Activated CD8-positive, alpha-beta T cell treated with anti-CD3 and anti-CD28 coated beads, Interleukin-2, amount 10 ng/mL, durations not matched to agents 7 days and 5 days (primary cell): ENCODE measurements at regions of chr17 and their contacts with region 1.

Region 1: DNA sequence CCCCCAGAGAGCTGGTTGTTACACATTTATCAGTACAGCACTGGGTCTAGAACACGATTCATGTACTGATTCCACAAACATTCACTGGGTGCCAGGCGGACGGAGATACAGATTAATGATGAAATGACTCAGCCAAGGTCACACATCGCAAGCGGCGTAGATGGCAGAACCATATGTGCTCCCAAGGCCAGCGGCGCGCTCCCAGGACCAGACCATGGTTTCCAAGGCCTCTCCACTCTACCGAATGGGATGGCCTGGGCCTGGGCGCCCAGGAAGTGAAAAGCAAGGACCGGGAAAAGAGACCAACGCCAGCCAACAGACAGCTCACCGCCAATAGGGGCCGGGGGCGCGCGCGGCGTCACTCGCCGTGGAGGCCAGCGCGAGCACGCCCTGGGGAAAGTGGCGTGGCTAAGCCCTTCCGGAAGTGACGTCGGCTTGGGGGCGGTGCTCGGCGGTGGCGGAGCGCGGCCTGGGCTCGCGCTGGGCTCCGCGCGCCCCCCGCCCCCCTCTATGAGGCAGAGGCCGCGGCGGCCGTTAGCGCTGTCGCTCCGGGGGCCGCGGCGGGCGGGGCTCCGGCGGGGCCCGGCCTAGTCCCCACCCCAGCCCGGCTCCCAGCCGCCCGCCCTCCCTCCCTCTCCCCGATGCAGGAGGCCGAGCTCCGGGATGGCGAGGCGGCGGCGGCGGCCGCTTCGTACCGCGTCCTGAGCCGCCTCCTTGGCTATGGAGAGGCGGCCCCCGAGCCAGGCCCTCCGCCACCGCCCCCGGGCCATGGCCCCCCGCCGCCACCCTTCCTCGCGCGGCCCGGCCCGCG is at the start of gene SOCS7:
- DNase-seq: peak; percentile 92
- ATAC-seq: peak; percentile 83
- H3K4me3 Mint-ChIP-seq: peak within 1 kb of the TSS; percentile 89
- H3K27ac Mint-ChIP-seq: peak within 1 kb of the TSS; percentile 96
- H3K4me1 Mint-ChIP-seq: peaks cover 36% of the 10 kb centered on the region
- H3K27me3 Mint-ChIP-seq: no peaks in the 10 kb centered on the region
- total RNA-seq, gene SOCS7: 13.0 to 15.3 TPM

Region 2: GRCh38 chr17:38322091-38322779 is 29.4 kb before region 1 on chr17:
- CTCF ChIA-PET with region 1: interaction called, 33 read pairs
- POLR2A ChIA-PET with region 1: interaction called, 3 read pairs
- DNase-seq: peak; percentile 80
- ATAC-seq: peak; percentile 81
- H3K4me3 Mint-ChIP-seq: no peak overlapping the region
- H3K27ac Mint-ChIP-seq: no peak overlapping the region
- H3K4me1 Mint-ChIP-seq: peaks cover 10% of the 10 kb centered on the region
- H3K27me3 Mint-ChIP-seq: no peaks in the 10 kb centered on the region

Region 3: GRCh38 chr17:38341035-38341721 is 10.4 kb before region 1 on chr17:
- CTCF ChIA-PET with region 1: interaction called, 18 read pairs
- POLR2A ChIA-PET with region 1: no interaction called
- DNase-seq: no peak
- ATAC-seq: no peak
- H3K4me3 Mint-ChIP-seq: no peak overlapping the region
- H3K27ac Mint-ChIP-seq: no peak overlapping the region
- H3K4me1 Mint-ChIP-seq: no peaks in the 10 kb centered on the region
- H3K27me3 Mint-ChIP-seq: peaks cover 2% of the 10 kb centered on the region

Region 4: GRCh38 chr17:38379438-38379837 is 27.8 kb after region 1 on chr17:
- CTCF ChIA-PET with region 1: interaction called, 31 read pairs
- POLR2A ChIA-PET with region 1: no interaction called
- DNase-seq: no peak
- ATAC-seq: no peak
- H3K4me3 Mint-ChIP-seq: no peak overlapping the region
- H3K27ac Mint-ChIP-seq: no peak overlapping the region
- H3K4me1 Mint-ChIP-seq: peaks cover 6% of the 10 kb centered on the region
- H3K27me3 Mint-ChIP-seq: no peaks in the 10 kb centered on the region

Region 5: DNA sequence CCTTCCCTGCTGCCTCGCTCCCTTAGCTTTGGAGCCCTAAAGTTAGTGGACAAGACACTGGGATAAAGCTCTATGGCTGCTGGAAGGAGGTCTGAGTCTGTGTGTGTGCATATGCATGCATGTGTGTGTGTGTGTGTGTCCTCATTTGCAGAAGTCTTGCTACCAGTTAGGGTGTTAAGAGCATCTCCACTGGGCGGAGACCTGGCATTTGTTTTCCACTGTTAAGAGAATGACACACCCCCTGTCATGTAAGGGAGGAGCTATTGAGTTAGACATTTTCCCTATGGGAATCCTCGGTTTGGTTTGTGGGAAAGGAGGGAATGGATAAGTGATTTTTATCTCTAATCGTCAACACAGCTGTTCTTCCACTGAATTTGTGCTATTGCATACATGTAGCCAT is 51.9 kb after region 1 on chr17:
- CTCF ChIA-PET with region 1: interaction called, 12 read pairs
- POLR2A ChIA-PET with region 1: interaction called, 3 read pairs
- DNase-seq: no peak
- ATAC-seq: no peak
- H3K4me3 Mint-ChIP-seq: no peak overlapping the region
- H3K27ac Mint-ChIP-seq: no peak overlapping the region
- H3K4me1 Mint-ChIP-seq: peaks cover 5% of the 10 kb centered on the region
- H3K27me3 Mint-ChIP-seq: no peaks in the 10 kb centered on the region

Region 6: GRCh38 chr17:38421171-38421841 is 69.7 kb after region 1 on chr17:
- CTCF ChIA-PET with region 1: interaction called, 45 read pairs
- POLR2A ChIA-PET with region 1: no interaction called
- DNase-seq: no peak
- ATAC-seq: no peak
- H3K4me3 Mint-ChIP-seq: no peak overlapping the region
- H3K27ac Mint-ChIP-seq: no peak overlapping the region
- H3K4me1 Mint-ChIP-seq: peaks cover 5% of the 10 kb centered on the region
- H3K27me3 Mint-ChIP-seq: peaks cover 51% of the 10 kb centered on the region